Right lobe of liver (tissue), 6 donors: ENCODE measurements at regions of chr7 and their contacts with region 1.

Region 1: GRCh38 chr7:56009695-56010094 is 41.5 kb downstream of the PSPH start:
- DNase-seq: peak; percentile 54 to 78 (median 73)
- ATAC-seq: peak; percentile 87 to 95 (median 89)
- H3K4me3 ChIP-seq: no peak overlapping the region
- H3K27ac ChIP-seq: no peak overlapping the region
- H3K4me1 ChIP-seq: peaks cover 0 to 3% (median 0%) of the 10 kb centered on the region in 4 donors
- H3K27me3 ChIP-seq: no peaks in the 10 kb centered on the region
- CTCF ChIP-seq: no peak
- POLR2A ChIP-seq: no peak

Region 2: GRCh38 chr7:56063882-56064625 is 54.4 kb after region 1 on chr7 and contains the start of gene SUMF2:
- intact Hi-C with region 1: loop called in 1 of 2 experiments (anchors 5 kb)
- DNase-seq: peak; percentile 93 to 95 (median 95)
- ATAC-seq: peak; percentile 96 to 97 (median 96)
- H3K4me3 ChIP-seq: peak within 1 kb of the TSS; percentile 88 to 97 (median 97)
- H3K27ac ChIP-seq: peak within 1 kb of the TSS; percentile 90 to 92 (median 92)
- H3K4me1 ChIP-seq: peaks cover 0 to 19% (median 0%) of the 10 kb centered on the region in 4 donors
- H3K27me3 ChIP-seq: no peaks in the 10 kb centered on the region
- CTCF ChIP-seq: peak in 2 of 4 donors; percentile 16 to 22
- POLR2A ChIP-seq: peak; percentile 87
- total RNA-seq, gene SUMF2: 76.9 to 92.4 (median 86.5) TPM

Region 3: DNA sequence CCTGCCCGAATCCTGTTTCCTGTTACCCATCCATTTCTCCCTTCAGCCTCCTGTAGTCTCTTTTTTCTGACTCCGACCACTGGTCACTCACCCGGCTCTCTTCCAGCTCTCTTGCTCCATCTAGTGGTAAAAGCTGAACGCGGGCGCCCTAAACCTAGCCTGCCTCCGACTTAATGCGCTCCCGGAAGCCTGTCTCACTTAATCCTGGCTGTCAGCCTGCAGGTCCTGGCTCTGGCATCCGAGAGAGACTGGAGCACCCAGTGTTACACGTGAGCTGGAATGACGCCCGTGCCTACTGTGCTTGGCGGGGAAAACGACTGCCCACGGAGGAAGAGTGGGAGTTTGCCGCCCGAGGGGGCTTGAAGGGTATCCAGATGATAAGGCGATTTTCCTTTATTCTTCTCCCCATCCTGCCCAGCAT is 64.7 kb after region 1 on chr7:
- intact Hi-C with region 1: loop called (anchors 5 to 10 kb)
- DNase-seq: peak; percentile 89 to 96 (median 95)
- ATAC-seq: peak; percentile 97 to 98 (median 98)
- H3K4me3 ChIP-seq: no peak overlapping the region
- H3K27ac ChIP-seq: no peak overlapping the region
- H3K4me1 ChIP-seq: peaks cover 0 to 22% (median 7%) of the 10 kb centered on the region in 4 donors
- H3K27me3 ChIP-seq: no peaks in the 10 kb centered on the region
- CTCF ChIP-seq: peak; percentile 96
- POLR2A ChIP-seq: no peak